K562 (cell line): ENCODE measurements at regions of chr17 and their contacts with region 1.

Region 1: DNA sequence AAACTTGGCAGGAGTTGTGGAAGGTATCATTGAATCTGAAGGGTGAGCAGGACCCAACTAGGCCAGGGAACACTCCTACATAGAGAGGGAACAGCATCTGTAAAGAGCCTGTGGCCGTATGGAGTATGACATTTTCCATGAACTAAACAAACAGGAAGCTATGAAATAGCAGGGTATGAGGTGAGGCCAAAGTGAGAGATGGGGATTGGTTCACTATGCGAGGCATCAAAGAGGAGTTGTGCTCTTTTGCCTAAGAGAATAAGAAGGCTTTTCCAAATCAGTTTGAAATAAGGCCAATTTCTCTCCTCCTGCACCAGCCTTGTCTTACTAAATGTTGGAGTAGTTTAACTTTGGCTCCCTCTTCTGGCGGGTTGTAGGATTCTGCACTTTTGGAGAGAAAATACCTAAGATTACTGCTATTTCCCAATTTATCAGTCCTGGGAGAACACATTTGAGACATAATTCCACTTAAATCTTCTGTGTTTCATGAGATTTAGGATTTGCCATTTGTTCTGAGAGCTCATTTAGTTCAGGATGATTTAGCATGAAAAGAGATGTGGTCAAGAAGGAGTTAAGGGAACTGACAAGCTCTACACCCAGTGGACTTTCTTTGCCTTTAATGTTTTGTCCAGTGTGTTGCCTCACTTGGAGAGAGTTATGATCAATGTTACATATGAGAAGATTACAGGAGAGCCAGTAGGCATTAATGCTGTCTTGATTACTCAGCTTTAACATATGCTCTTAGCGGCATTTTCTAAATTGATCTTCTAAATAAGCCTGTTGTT is 55.4 kb downstream of the TNRC6C start:
- DNase-seq: peak; percentile 48 to 82 (median 53)
- ATAC-seq: peak; percentile 77
- H3K4me3 ChIP-seq: no peak overlapping the region
- H3K27ac ChIP-seq: no peak overlapping the region
- H3K4me1 ChIP-seq: peaks cover 11 to 20% of the 10 kb centered on the region in 2 experiments; a peak in 4 of 5 replicates
- H3K27me3 ChIP-seq: no peaks in the 10 kb centered on the region
- CTCF ChIP-seq: peak; percentile 75 to 92 (median 81)
- EP300 ChIP-seq: no peak
- POLR2A ChIP-seq: no peak
- RAD21 ChIP-seq: peak; percentile 86 to 94

Region 2: DNA sequence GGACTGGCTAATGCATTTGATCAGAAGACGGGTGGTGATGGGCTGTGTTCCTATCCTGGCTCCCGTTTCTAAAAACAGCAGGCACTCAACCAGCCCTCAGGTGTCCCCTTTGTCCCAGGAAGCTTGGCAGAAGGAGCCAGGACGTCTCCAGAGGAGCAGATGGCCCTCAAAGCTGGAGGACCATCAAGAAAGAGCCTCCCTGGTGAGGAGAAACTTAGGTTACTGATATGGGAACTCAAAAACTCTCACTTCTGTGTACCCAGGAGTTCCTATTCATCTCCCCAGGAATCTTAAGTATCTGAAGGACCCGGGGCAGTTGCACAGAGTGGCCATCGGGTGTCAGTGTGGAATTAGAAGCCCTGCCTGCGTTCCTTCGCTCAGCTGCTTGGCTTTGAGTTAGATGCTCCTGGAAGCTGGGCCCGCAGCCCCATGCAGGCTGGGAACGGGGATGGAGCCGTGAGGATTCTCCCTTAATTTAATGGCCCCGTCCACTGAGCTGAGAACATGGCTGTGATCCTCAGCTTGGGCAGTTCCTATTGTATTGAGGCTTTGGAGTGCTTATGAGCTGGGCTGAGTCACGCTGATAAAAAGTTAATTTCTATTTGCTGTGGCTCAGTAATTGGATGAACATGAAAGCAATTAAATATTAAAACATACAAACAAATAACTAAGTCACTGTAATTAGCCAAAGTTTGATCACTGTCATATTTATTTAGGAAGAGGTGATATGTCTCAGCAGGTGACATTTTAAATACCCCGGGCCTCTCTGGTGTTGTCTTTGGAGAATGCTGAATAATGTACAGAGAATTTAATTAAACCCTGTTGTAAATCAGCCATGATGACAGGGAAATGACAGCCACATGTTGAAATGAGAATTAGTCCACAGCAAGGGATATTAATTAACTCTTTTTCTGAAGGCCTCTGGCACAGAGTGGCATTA is 471.1 kb before region 1 on chr17:
- CTCF ChIA-PET with region 1: interaction called, 10 read pairs
- POLR2A ChIA-PET with region 1: no interaction called
- in situ Hi-C with region 1: loop called (anchors 10 kb)
- intact Hi-C with region 1: loop called (anchors 2 kb)
- DNase-seq: peak; percentile 58 to 82 (median 68)
- ATAC-seq: peak; percentile 96
- H3K4me3 ChIP-seq: no peak overlapping the region
- H3K27ac ChIP-seq: no peak overlapping the region
- H3K4me1 ChIP-seq: peaks cover 4 to 11% of the 10 kb centered on the region in 2 experiments; a peak in 3 of 5 replicates
- H3K27me3 ChIP-seq: peaks cover 37 to 50% of the 10 kb centered on the region in 2 experiments; a peak in 4 of 5 replicates
- CTCF ChIP-seq: peak; percentile 88 to 92 (median 91)
- EP300 ChIP-seq: no peak
- POLR2A ChIP-seq: no peak
- RAD21 ChIP-seq: peak; percentile 80 to 91

Region 3: GRCh38 chr17:77772461-77772897 is 241.4 kb before region 1 on chr17:
- CTCF ChIA-PET with region 1: interaction called, 19 read pairs
- POLR2A ChIA-PET with region 1: no interaction called
- in situ Hi-C with region 1: loop called (anchors 5 kb)
- intact Hi-C with region 1: loop called (anchors 1 kb)
- DNase-seq: peak; percentile 76 to 89 (median 84)
- ATAC-seq: peak; percentile 98
- H3K4me3 ChIP-seq: no peak overlapping the region
- H3K27ac ChIP-seq: no peak overlapping the region
- H3K4me1 ChIP-seq: peaks cover 12 to 25% of the 10 kb centered on the region in 2 experiments; a peak in 4 of 5 replicates
- H3K27me3 ChIP-seq: peaks cover 11 to 51% of the 10 kb centered on the region in 2 experiments
- CTCF ChIP-seq: peak; percentile 89 to 93 (median 90)
- EP300 ChIP-seq: no peak
- POLR2A ChIP-seq: no peak
- RAD21 ChIP-seq: peak; percentile 74 to 91

Region 4: DNA sequence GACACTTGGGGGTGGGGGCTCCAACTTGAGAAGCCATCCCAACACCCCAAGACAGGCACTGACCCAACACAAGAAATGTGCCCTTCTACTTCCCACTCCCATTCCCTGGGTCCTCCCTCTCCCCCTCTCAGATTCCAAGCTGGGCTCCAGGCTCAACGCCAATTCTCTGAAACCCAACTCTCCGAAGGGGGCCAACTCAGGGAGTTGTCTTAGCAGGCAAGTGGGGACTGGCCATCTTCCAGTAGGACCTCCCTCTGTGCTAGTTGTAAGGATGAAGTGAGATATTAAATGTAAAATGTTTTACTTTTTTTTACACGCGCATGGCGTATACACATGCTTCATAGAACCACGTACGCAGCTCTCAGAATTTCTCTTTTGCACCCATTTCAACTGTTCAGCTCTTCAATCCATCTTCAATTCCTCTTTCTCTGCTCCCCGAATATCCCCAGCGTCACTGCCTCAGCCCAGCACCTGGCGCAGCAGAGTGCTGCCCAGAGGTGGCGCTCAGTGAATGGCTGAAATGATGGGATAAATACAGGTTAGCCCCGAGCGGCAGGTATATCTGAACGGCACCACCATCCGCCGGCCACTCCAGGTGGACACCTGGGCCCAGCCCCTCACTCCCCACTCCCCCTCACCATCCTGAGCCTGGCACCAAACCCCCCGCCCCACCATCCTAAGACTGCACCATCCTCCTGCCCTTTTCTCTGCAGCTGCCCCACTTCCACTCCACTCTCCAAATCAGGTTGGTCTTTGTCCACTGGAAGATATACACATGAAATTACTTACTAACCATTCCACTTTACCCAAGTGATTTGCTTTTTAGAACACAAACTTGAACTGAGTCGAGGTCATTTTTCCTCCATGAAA is 99.3 kb before region 1 on chr17:
- CTCF ChIA-PET with region 1: interaction called, 3 read pairs
- POLR2A ChIA-PET with region 1: no interaction called
- in situ Hi-C with region 1: no loop called
- intact Hi-C with region 1: loop called (anchors 10 kb)
- DNase-seq: no peak
- ATAC-seq: peak; percentile 67; the same call in 2 of the 3 replicates
- H3K4me3 ChIP-seq: no peak overlapping the region
- H3K27ac ChIP-seq: no peak overlapping the region
- H3K4me1 ChIP-seq: no peaks in the 10 kb centered on the region
- H3K27me3 ChIP-seq: peaks cover 30 to 46% of the 10 kb centered on the region in 2 experiments
- CTCF ChIP-seq: peak in 2 of 3 experiments; percentile 27 to 39; a peak in 3 of 6 replicates
- EP300 ChIP-seq: no peak
- POLR2A ChIP-seq: no peak
- RAD21 ChIP-seq: peak in 1 of 2 experiments; percentile 25; a peak in 1 of 4 replicates

Region 5: DNA sequence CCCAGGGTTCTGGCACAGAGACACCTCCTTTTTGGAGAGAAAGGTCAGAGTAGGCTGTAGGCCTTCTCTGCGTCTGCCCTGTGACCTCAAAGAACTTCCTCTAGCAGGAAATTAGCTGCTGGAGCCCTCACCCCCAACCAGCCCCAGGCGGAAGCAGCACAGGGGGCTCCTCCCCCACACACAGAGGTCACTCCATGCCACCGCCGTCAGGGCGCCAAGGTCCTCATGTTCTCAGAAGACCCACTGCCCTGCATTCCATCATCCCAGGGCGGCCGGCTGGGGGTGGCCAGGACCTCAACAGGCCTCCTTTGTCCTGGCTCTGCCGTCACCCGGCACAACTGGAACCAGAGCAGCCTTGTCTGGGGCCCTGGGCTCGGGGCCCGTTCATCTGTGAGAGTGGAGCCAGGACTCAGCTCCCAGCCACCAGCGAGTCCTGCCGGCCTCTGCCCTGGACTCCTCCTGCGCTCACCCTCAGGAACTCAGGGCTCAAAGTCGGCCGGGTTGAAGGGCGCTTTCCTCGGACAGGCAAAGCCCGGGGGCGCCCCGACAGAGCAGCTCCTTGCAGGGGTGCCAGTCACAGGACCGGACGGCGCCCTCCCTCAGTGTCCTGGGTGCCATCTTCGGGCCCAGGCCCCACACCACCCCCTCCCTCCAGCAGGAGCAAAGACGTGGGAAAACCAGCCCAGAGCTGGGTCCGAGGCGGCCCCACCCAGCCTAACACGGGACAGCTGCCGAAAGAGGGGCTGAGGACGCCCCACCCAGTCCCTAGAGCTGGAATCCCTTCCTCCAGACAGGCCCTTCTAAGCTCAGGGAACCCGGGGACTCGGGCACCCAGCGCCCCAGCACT is 113.6 kb after region 1 on chr17:
- CTCF ChIA-PET with region 1: no interaction called
- POLR2A ChIA-PET with region 1: no interaction called
- in situ Hi-C with region 1: no loop called
- intact Hi-C with region 1: no loop called
- DNase-seq: peak; percentile 51 to 86 (median 64)
- ATAC-seq: peak; percentile 63
- H3K4me3 ChIP-seq: peak overlapping the region; percentile 98
- H3K27ac ChIP-seq: peak overlapping the region; percentile 81
- H3K4me1 ChIP-seq: peaks cover 29 to 85% of the 10 kb centered on the region in 2 experiments
- H3K27me3 ChIP-seq: no peaks in the 10 kb centered on the region
- CTCF ChIP-seq: no peak
- EP300 ChIP-seq: peak; percentile 75; the same call in 1 of the 2 replicates
- POLR2A ChIP-seq: peak; percentile 76
- RAD21 ChIP-seq: no peak